B cell (primary cell): ENCODE measurements at regions of chr11 and their contacts with region 1.

Region 1: DNA sequence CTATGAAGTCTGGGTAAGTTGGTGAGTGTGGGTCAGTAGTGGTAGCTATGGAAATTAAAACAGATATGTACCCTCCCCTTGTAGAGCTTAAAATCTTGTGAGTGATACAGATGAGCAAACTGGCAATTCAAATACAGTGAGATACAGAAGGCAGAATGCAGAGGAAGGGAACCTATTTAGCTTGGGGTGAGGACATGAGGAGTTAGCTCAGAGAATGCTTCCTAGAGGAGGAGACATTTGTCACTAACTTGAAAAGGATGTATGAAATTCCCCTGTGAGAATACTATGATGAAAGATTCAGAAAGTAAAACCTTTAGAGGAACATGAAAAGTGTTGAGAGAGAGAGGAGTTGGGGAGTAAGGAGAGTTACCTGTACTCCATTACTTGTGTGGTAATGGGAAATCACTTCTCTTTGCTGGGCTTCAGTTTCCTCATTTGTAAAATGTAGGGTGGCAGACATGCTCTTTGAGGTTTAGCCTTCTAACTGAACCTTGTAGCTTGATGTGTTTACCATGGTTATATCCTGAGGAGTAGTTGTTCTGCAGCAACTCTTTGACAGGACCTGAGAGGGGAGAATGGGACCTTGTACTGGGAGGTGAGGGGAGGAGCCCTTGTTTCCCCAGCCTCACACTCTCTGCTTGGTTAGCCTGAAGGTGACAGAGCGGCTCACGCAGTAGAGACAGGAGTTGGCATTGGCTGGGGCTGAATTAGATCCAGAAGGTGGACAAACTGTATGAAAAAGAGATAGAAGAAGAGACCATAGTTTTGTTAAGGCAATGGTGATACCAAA is 17.9 kb downstream of the SWAP70 start:
- DNase-seq: peak; percentile 71
- ATAC-seq: peak; percentile 58
- H3K4me3 ChIP-seq: peak overlapping the region in 3 of 5 experiments; percentile 11 to 28 (median 22)
- H3K4me3 Mint-ChIP-seq: no peak overlapping the region
- H3K27ac ChIP-seq: peak overlapping the region; percentile 62 to 85
- H3K27ac Mint-ChIP-seq: no peak overlapping the region
- H3K4me1 ChIP-seq: peaks cover 86 to 88% of the 10 kb centered on the region in 2 donors
- H3K4me1 Mint-ChIP-seq: peaks cover 67% of the 10 kb centered on the region
- H3K27me3 ChIP-seq: no peaks in the 10 kb centered on the region
- H3K27me3 Mint-ChIP-seq: no peaks in the 10 kb centered on the region
- CTCF ChIP-seq: no peak

Region 2: DNA sequence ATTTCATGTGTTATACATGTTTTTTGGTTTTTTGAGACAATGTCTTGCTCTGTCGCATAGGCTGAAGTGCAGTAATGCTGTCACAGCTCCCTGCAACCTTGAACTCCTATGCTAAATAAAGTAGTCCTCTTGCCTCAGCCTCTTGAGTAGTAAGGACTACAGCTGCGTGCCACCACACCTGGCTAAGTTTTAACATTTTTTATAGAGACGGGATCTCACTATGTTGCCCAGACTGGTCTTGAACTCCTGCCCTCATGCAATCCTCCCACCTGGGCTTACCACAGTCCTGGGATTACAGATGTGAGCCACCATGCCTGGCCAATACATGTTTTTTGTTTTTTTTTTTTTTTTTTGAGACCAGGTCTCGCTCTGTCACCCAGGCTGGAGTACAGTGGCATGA is 16.0 kb after region 1 on chr11:
- CTCF ChIA-PET with region 1: interaction called, 11 read pairs
- POLR2A ChIA-PET with region 1: interaction called, 6 read pairs
- intact Hi-C with region 1: loop called (anchors 1 kb)
- DNase-seq: no peak
- ATAC-seq: peak; percentile 9
- H3K4me3 ChIP-seq: no peak overlapping the region
- H3K4me3 Mint-ChIP-seq: peak overlapping the region; percentile 72
- H3K27ac ChIP-seq: peak overlapping the region; percentile 48 to 82
- H3K27ac Mint-ChIP-seq: peak overlapping the region; percentile 90
- H3K4me1 ChIP-seq: peaks cover 73 to 85% of the 10 kb centered on the region in 2 donors
- H3K4me1 Mint-ChIP-seq: peaks cover 76% of the 10 kb centered on the region
- H3K27me3 ChIP-seq: no peaks in the 10 kb centered on the region
- H3K27me3 Mint-ChIP-seq: no peaks in the 10 kb centered on the region
- CTCF ChIP-seq: no peak